Activated CD4-positive, alpha-beta memory T cell treated with anti-CD3 and anti-CD28 coated beads for 36 hours (primary cell): ENCODE measurements at regions of chr5 and their contacts with region 1.

Region 1: GRCh38 chr5:119267958-119268386 is 87.8 kb upstream of the TNFAIP8 start:
- DNase-seq: peak; percentile 91
- H3K4me3 Mint-ChIP-seq: peak overlapping the region; percentile 99
- H3K27ac Mint-ChIP-seq: peak overlapping the region; percentile 99
- H3K4me1 Mint-ChIP-seq: peaks cover 49% of the 10 kb centered on the region
- H3K27me3 Mint-ChIP-seq: no peaks in the 10 kb centered on the region

Region 2: GRCh38 chr5:119070828-119071572 is 197.0 kb before region 1 on chr5 and contains the start of gene DMXL1:
- CTCF ChIA-PET with region 1: interaction called, 5 read pairs
- POLR2A ChIA-PET with region 1: interaction called, 3 read pairs
- intact Hi-C with region 1: loop called (anchors 2 kb)
- DNase-seq: peak; percentile 99
- H3K4me3 Mint-ChIP-seq: peak within 1 kb of the TSS; percentile 85
- H3K27ac Mint-ChIP-seq: peak within 1 kb of the TSS; percentile 96
- H3K4me1 Mint-ChIP-seq: peaks cover 40% of the 10 kb centered on the region
- H3K27me3 Mint-ChIP-seq: peaks cover 2% of the 10 kb centered on the region
- total RNA-seq, gene DMXL1: 24.2 to 26.9 TPM

Region 3: GRCh38 chr5:119255571-119256356 is 12.2 kb before region 1 on chr5:
- CTCF ChIA-PET with region 1: interaction called, 14 read pairs
- POLR2A ChIA-PET with region 1: no interaction called
- intact Hi-C with region 1: no loop called
- DNase-seq: no peak
- H3K4me3 Mint-ChIP-seq: no peak overlapping the region
- H3K27ac Mint-ChIP-seq: no peak overlapping the region
- H3K4me1 Mint-ChIP-seq: peaks cover 4% of the 10 kb centered on the region
- H3K27me3 Mint-ChIP-seq: no peaks in the 10 kb centered on the region

Region 4: GRCh38 chr5:119302916-119303897 is 35.2 kb after region 1 on chr5:
- CTCF ChIA-PET with region 1: interaction called, 6 read pairs
- POLR2A ChIA-PET with region 1: interaction called, 7 read pairs
- intact Hi-C with region 1: loop called (anchors 1 kb)
- DNase-seq: no peak
- H3K4me3 Mint-ChIP-seq: peak overlapping the region; percentile 17
- H3K27ac Mint-ChIP-seq: peak overlapping the region; percentile 90
- H3K4me1 Mint-ChIP-seq: peaks cover 93% of the 10 kb centered on the region
- H3K27me3 Mint-ChIP-seq: no peaks in the 10 kb centered on the region

Region 5: DNA sequence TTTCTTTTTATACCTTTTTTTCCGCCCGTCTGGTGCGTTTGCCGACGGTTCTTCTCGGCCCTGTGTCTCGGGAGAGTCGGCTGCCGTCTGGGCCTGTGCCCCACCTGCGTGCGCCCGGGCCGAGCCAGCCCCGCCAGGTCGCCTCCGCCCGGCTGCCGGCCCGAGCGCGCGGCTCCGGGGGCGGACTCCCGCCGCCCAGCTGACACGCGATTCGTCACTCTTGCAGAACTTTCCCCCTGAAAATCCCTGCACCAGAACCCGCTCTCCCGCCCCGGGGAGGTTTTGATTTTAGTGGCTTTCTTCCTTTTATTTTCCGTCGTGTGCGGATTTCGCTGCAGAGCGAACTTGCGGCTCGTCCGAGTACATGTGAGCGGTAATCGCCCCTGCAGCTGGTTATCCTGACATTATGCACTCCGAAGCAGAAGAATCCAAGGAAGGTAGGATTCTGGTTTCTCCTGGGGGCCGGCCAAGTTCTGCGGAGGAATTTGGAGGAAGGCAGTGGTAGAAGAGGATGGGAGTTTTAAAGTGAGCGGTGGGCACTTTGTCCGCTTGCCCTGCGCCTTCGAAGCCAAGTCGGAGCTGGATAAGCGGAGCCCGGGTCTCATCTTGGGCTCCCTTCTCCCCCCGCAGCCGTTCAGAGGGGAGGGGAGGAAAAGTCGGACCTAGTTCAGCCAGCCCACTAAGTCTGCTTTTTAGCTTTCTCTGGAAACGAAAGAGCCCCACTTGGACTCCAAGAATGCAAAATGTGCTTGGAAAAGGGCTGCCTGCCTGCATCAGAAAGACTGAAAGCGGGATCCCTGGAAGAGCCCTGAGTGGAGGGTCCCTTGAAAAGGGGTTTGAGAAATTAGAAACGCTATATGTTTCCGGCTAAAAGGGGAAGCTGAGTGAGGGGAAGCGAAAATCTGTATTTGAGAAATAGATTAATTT is 88.0 kb after region 1 on chr5 and contains the start of gene TNFAIP8:
- CTCF ChIA-PET with region 1: interaction called, 5 read pairs
- POLR2A ChIA-PET with region 1: interaction called, 26 read pairs
- intact Hi-C with region 1: no loop called
- DNase-seq: peak; percentile 90
- H3K4me3 Mint-ChIP-seq: peak within 1 kb of the TSS; percentile 99
- H3K27ac Mint-ChIP-seq: peak within 1 kb of the TSS; percentile 90
- H3K4me1 Mint-ChIP-seq: peaks cover 71% of the 10 kb centered on the region
- H3K27me3 Mint-ChIP-seq: no peaks in the 10 kb centered on the region
- total RNA-seq, gene TNFAIP8: 153 to 159 TPM

Region 6: DNA sequence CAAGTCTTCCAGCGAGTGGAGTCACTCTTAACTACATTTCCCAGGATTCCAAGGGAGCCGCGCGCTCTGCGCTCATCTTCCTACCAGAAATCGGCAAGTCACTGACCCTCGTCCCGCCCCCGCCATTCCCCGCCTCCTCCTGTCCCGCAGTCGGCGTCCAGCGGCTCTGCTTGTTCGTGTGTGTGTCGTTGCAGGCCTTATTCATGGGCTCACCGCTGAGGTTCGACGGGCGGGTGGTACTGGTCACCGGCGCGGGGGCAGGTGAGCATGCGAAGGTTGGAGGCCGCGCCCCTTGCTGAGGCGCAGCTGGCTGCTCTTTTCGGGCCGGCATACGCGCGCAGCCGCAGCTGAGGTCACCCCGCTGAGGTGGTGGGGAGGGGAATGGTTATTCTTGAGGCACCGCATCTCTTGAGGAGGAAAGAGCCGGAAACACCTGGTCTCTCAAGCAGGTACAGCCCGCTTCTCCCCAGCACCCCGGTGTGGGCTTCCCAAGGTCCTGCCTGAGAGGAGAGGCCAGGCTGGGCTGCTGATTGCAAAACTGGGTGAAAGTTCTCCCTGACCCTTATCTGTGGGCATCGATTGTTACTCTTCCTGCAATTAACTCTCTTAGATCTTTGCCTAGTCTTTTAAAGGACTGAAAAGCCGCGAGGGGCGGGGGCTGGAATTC is 184.5 kb after region 1 on chr5 and contains the start of gene HSD17B4:
- CTCF ChIA-PET with region 1: no interaction called
- POLR2A ChIA-PET with region 1: no interaction called
- intact Hi-C with region 1: loop called (anchors 5 kb)
- DNase-seq: peak; percentile 88
- H3K4me3 Mint-ChIP-seq: peak within 1 kb of the TSS; percentile 92
- H3K27ac Mint-ChIP-seq: peak within 1 kb of the TSS; percentile 79
- H3K4me1 Mint-ChIP-seq: peaks cover 14% of the 10 kb centered on the region
- H3K27me3 Mint-ChIP-seq: no peaks in the 10 kb centered on the region
- total RNA-seq, gene HSD17B4: 83.2 to 117 TPM